ENCODE measurements at regions of chr19 and their contacts with region 1.

Region 1: GRCh38 chr19:8641908-8642547 is 11.6 kb downstream of the NFILZ start:
- DNase-seq: no peak
- H3K4me3 ChIP-seq: no peak overlapping the region
- CTCF ChIP-seq: peak; percentile 51

Region 2: DNA sequence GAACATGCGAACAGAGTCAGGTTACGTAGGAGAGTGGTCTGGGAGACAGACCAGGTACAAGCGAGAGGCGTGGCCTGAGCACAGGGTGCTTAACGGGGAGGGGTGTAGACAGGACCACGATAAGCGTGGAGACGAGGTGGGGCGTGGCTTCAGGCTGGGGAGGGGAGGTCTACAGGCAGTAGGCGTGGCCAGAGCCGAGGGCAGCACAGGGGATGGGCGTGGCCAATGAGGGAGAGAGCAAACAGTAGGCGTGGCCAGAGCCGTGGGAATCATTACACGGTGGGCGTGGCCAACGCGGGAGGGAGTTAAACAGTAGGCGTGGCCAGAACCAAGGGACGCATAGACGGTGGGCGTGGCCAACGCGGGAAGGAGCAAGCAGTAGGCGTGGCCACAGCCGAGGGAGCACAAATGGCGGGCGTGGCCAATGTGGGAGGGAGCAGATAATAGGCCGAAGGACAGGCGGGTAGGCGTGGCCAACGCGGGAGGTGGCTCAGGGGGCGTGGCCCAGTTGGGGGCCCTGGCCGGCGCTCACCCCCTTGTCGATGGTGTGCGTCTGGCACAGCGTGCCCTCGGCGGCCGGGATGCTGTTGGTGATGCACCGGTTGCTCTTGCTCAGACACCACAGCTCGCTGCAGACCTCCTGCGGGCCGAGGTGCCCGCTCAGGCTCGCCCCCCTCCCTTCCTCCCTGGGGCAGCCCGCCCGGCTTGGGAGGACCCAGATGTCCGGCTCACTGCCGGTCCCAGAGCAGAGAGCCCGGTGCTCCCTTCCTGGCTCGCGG is 49.6 kb before region 1 on chr19:
- CTCF ChIA-PET with region 1: interaction called, 15 read pairs
- POLR2A ChIA-PET with region 1: no interaction called
- DNase-seq: peak; percentile 61
- H3K4me3 ChIP-seq: peak overlapping the region; percentile 51
- CTCF ChIP-seq: no peak

Region 3: DNA sequence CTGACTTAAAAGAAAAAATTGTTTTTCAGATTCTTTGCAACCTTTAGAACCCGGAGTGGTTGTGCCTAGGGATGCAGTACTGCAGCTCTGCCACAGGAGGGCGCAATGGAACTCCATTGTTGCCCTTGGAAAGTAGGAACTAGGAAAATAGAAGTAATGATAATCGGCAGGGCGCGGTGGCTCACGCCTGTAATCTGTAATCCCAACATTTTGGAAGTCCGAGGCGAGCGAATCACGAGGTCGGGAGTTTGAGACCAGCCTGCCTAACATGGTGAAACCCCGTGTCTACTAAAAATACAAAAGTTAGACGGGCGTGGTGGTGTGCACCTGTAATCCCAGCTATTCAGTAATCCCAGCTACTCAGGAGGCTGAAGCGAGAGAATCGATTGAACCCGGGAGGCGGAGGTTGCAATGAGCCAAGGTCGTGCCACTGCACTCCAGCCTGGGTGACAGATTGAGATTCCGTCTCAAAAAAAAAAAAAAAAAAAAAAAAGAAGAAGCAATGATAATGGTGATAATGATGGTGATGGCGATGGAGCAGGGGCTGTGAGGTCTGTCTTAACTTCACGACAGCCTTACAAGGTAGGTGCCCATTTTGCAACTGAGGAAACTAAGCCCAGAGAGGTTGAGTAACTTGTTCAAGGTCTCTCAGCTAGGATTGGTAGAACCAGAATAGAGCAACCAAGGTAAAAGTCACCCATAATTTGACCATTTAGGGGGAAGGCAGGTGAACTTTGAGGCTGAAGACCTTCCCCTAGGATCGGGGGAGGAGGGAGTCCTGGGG is 26.0 kb before region 1 on chr19:
- CTCF ChIA-PET with region 1: interaction called, 49 read pairs
- POLR2A ChIA-PET with region 1: no interaction called
- DNase-seq: no peak
- H3K4me3 ChIP-seq: no peak overlapping the region
- CTCF ChIP-seq: peak; percentile 83

Region 4: DNA sequence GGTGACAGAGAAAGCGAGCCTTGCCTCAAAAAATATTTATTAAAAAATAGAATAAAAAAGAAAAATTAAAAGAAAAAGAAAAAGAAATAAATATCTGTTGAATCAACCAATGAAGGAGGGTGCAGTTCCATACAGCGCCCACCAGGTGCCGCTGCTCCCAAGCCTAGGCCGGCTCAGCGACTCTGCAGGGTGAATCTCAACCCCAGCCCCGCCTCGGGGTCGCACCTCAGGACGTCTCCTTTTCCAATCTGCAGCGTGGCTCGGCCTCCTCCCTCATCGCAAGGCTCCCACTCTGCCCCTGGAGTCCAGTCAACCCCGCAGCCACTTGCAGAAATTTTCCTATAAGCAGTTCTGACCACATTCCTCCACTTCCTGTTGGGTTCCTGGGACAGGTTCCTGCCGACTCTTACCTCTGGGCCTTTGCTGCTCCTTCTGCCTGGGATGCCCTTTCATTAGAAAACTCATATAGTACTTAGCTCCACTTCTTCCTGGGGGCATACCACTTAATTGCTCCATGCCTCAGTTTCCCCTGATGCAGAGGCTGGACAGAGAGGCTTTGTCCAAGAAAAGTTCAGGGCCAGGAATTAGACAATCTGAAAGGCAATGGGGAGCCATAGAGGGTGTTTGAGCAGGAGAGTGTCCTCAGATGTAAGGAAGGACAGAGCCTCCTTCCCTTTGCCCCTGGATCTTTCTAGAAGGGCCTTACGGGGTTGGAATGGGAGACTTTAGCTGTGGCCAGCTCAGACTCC is 12.7 kb after region 1 on chr19:
- CTCF ChIA-PET with region 1: interaction called, 17 read pairs
- POLR2A ChIA-PET with region 1: no interaction called
- DNase-seq: no peak
- H3K4me3 ChIP-seq: peak overlapping the region; percentile 32; the same call in 1 of the 2 replicates
- CTCF ChIP-seq: peak; percentile 91

Region 5: GRCh38 chr19:8697671-8698432 is 55.8 kb after region 1 on chr19:
- CTCF ChIA-PET with region 1: no interaction called
- POLR2A ChIA-PET with region 1: no interaction called
- DNase-seq: no peak
- H3K4me3 ChIP-seq: no peak overlapping the region
- CTCF ChIP-seq: no peak

Measured in AG04449 (cell line).